Left ventricle myocardium superior (tissue), 1 donor: ENCODE measurements at regions of chr2 and their contacts with region 1.

Region 1: DNA sequence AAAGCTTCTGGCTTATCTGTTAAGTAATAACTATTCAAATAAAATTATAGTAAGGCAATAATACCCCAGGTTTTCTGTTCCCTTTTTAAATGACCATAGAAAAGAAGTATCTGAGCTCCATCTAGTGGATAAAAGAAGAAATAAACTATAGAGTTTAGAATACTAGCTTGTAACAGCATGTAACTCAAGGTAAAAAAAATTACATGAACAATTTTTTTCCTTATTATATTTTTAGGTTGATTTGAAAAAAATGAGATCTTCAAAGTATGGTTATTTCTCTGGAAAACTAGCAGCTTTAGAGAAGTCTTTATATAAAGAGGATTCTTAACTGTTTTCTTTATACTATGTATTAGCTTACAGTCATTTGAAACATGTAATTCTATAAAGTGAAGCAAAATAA is 58.1 kb downstream of the NCKAP1 start:
- DNase-seq: no peak
- ATAC-seq: peak; percentile 43

Region 2: GRCh38 chr2:182763311-182763912 is 216.7 kb before region 1 on chr2:
- intact Hi-C with region 1: loop called (anchors 5 kb)
- DNase-seq: no peak
- ATAC-seq: peak; percentile 69

Region 3: GRCh38 chr2:182933629-182934028 is 46.5 kb before region 1 on chr2:
- intact Hi-C with region 1: loop called (anchors 10 kb)
- DNase-seq: no peak
- ATAC-seq: no peak